ENCODE measurements at regions of chr5 and their contacts with region 1.

Region 1: DNA sequence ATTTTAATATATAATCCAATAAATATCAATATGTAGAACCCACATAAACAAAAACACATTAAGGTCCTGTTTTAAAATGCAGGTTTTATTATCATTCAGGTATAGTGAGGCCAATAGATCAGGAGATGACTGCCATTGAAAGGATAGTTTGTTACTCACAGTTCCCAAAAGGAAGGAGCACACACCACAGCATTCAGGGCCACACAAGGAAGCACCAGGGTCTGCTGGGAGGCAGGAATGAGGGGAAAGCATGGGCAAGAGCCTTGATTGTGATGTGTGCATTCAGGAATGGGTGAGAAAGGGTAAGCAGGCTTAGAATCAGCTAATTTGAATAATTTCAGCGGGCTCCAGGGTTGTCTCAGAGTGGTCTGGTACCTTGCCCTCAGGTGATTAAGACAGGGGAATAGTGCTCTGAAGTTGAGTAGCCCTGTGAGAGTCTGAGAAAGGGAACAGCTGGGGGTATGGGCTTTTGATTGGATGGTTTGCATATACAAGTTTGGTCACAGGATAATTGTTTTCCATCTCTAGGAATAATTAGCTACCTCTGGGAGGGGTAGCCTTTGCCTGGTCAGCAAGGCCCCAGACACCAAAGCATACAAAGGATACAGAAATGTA is 19.8 kb upstream of the OTULIN start:
- DNase-seq: no peak
- H3K4me3 Mint-ChIP-seq: no peak overlapping the region
- H3K27ac Mint-ChIP-seq: no peak overlapping the region
- H3K4me1 Mint-ChIP-seq: peaks cover 11% of the 10 kb centered on the region
- H3K27me3 Mint-ChIP-seq: peaks cover 25% of the 10 kb centered on the region

Region 2: GRCh38 chr5:14353726-14354474 is 290.8 kb before region 1 on chr5:
- CTCF ChIA-PET with region 1: interaction called, 14 read pairs
- POLR2A ChIA-PET with region 1: no interaction called
- DNase-seq: no peak
- H3K4me3 Mint-ChIP-seq: no peak overlapping the region
- H3K27ac Mint-ChIP-seq: no peak overlapping the region
- H3K4me1 Mint-ChIP-seq: peaks cover 8% of the 10 kb centered on the region
- H3K27me3 Mint-ChIP-seq: no peaks in the 10 kb centered on the region

Region 3: GRCh38 chr5:14481349-14481748 is 163.4 kb before region 1 on chr5:
- CTCF ChIA-PET with region 1: no interaction called
- POLR2A ChIA-PET with region 1: no interaction called
- DNase-seq: no peak
- H3K4me3 Mint-ChIP-seq: no peak overlapping the region
- H3K27ac Mint-ChIP-seq: no peak overlapping the region
- H3K4me1 Mint-ChIP-seq: peaks cover 13% of the 10 kb centered on the region
- H3K27me3 Mint-ChIP-seq: no peaks in the 10 kb centered on the region

Region 4: GRCh38 chr5:14739538-14739937 is 94.8 kb after region 1 on chr5:
- CTCF ChIA-PET with region 1: no interaction called
- POLR2A ChIA-PET with region 1: no interaction called
- DNase-seq: no peak
- H3K4me3 Mint-ChIP-seq: no peak overlapping the region
- H3K27ac Mint-ChIP-seq: no peak overlapping the region
- H3K4me1 Mint-ChIP-seq: peaks cover 33% of the 10 kb centered on the region
- H3K27me3 Mint-ChIP-seq: no peaks in the 10 kb centered on the region